Endothelial cell of umbilical vein (primary cell): ENCODE measurements at regions of chr6 and their contacts with region 1.

Region 1: GRCh38 chr6:2448820-2449571 is 203.6 kb upstream of the GMDS start:
- DNase-seq: peak; percentile 86
- H3K4me3 ChIP-seq: peak overlapping the region in 2 of 3 experiments; percentile 4 to 64
- H3K27ac ChIP-seq: no peak overlapping the region
- H3K4me1 ChIP-seq: peaks cover 4% of the 10 kb centered on the region
- H3K27me3 ChIP-seq: peaks cover under 1 to 2% of the 10 kb centered on the region in 2 experiments
- CTCF ChIP-seq: peak; percentile 60 to 69
- POLR2A ChIP-seq: no peak

Region 2: GRCh38 chr6:1524040-1524480 is 924.9 kb before region 1 on chr6:
- CTCF ChIA-PET with region 1: no interaction called
- POLR2A ChIA-PET with region 1: no interaction called
- dilution Hi-C with region 1: no loop called
- intact Hi-C with region 1: loop called (anchors 5 kb)
- DNase-seq: peak; percentile 58
- H3K4me3 ChIP-seq: no peak overlapping the region
- H3K27ac ChIP-seq: no peak overlapping the region
- H3K4me1 ChIP-seq: no peaks in the 10 kb centered on the region
- H3K27me3 ChIP-seq: peaks cover 0 to 5% of the 10 kb centered on the region in 2 experiments
- CTCF ChIP-seq: peak; percentile 76 to 83
- POLR2A ChIP-seq: no peak

Region 3: DNA sequence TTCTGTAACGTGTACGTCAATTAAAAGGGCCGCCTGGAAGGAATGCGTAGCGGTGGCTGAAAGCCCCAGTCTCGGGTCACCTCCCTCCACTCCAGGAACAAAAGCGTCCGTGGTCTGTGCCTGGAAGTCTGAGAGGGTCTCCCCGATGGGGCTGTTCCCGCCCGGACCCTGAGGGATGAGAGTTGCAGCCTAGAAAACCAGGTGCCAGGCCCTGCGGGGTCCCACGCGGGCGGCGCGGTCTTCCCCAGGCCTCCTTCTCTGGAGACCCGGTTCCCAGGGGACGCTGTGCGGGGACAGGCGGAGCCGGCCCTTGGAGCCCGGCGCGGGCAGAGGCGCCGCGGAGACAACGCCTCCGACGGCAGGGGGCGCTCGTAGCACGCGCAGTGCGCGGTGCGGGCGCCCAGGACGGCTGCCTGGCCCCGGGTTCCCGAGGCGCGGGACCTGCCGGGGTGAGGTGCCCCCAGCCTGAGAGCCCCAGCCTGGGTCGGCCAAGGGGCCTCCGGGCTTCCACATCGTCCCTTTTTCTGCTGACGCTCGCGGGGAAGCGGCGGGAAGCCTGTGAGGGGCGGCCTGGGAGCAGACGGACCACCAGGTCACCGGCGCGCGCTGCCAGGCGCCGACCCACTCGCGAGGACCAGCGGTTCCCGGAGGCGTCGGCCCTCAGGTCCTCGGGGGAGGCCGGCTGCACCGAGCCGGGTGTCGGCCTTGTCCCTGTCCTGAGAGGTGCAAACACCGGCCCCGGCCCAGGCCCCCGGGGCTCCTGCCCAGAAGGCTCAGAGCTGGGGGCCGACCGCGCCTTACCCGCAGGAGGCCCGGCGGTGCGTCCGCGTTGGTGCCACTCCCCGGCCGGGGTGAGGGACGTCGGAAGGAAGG is 844.6 kb before region 1 on chr6:
- CTCF ChIA-PET with region 1: interaction called, 7 read pairs
- POLR2A ChIA-PET with region 1: no interaction called
- dilution Hi-C with region 1: no loop called
- intact Hi-C with region 1: loop called (anchors 1 kb)
- DNase-seq: peak; percentile 63
- H3K4me3 ChIP-seq: peak overlapping the region; percentile 33 to 38 (median 36)
- H3K27ac ChIP-seq: no peak overlapping the region
- H3K4me1 ChIP-seq: peaks cover 3% of the 10 kb centered on the region
- H3K27me3 ChIP-seq: peaks cover 12 to 16% of the 10 kb centered on the region in 2 experiments
- CTCF ChIP-seq: peak; percentile 87 to 91
- POLR2A ChIP-seq: no peak

Region 4: DNA sequence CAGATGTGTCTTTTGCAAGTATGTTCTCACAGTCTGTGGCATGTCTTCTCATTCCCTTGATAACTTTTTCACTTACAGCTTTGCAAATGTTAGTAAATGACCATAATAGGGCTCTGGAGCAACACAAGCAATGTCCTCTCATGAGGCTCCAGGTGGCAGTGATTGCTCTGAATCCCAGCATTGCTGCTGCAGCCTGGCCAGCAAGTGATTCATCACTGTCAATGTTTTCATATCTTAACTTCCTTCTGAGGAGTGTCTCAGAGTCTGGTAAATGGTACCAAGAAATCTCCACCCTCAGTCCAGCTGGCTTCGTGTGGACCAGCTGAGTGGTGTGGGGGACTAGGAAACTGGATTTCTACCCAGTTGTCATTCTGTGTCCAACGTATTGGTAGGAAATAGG is 162.1 kb after region 1 on chr6:
- CTCF ChIA-PET with region 1: no interaction called
- POLR2A ChIA-PET with region 1: no interaction called
- dilution Hi-C with region 1: loop called (anchors 25 kb)
- intact Hi-C with region 1: no loop called
- DNase-seq: peak; percentile 26
- H3K4me3 ChIP-seq: no peak overlapping the region
- H3K27ac ChIP-seq: no peak overlapping the region
- H3K4me1 ChIP-seq: peaks cover 8% of the 10 kb centered on the region
- H3K27me3 ChIP-seq: no peaks in the 10 kb centered on the region
- CTCF ChIP-seq: no peak
- POLR2A ChIP-seq: no peak

Region 5: GRCh38 chr6:2695454-2696095 is 246.6 kb after region 1 on chr6:
- CTCF ChIA-PET with region 1: no interaction called
- POLR2A ChIA-PET with region 1: no interaction called
- dilution Hi-C with region 1: no loop called
- intact Hi-C with region 1: loop called (anchors 2 kb)
- DNase-seq: peak; percentile 55
- H3K4me3 ChIP-seq: no peak overlapping the region
- H3K27ac ChIP-seq: no peak overlapping the region
- H3K4me1 ChIP-seq: no peaks in the 10 kb centered on the region
- H3K27me3 ChIP-seq: peaks cover 0 to 4% of the 10 kb centered on the region in 2 experiments
- CTCF ChIP-seq: no peak
- POLR2A ChIP-seq: no peak